Right ventricle myocardium inferior (tissue), 1 donor: ENCODE measurements at regions of chr10 and their contacts with region 1.

Region 1: DNA sequence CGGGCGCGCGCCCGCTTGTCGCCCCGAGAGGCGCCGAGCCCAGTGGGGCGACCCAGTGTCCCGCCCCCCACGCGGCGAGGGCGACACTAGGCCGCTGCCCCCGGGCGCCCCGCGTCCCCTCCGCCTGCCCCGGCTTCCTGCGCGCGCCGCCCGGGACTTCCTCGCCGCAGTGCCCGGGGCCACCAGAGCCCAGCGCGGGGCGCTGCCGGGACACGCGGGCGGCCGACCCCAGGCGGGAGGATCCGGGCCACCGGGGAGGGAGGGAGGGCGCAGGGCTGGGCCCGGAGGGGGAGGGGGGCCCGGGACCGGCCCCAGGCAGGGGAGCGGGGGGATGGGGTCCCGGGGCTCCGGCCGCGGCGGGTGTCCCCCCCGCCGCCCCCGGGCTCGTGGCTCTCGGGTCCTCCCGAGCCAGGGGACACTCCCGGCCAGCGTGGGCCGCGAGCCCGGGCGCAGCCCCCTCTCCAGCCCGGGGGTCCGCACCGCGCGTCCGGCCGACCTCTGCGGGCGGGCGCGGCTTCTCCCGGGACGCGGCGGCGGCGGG is 435 bp upstream of the PWWP2B start:
- DNase-seq: peak; percentile 86
- ATAC-seq: peak; percentile 53

Region 2: GRCh38 chr10:132331526-132332432 is 64.8 kb before region 1 on chr10 and contains the start of gene LRRC27:
- intact Hi-C with region 1: loop called (anchors 2 kb)
- DNase-seq: peak; percentile 99
- ATAC-seq: peak; percentile 95
- total RNA-seq, gene LRRC27: 4.2 TPM

Region 3: DNA sequence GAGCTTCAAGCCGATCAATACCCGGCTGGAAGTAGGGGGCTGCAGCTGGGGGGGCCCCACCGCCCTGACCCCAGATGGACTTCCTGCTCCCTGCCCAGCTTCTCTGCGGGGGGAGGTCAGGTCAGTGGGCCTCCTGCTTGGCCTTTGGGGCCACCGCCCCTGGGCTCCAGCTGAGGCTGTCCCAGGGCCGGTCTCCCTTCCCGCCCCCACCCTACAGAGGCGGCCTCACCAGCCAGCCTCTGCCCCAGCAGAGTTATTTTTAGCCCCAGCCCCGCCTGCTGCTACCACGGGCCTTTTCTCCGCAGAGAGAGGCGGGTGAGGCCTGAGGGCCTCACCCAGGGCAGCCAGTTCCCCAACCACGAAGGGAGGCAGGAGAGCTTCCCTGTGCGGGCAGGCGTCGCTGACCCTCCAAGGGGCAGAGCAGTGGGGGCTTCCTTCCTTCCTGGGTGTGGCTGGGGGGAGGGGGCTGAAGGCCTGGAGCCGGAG is 24.9 kb after region 1 on chr10:
- intact Hi-C with region 1: loop called (anchors 2 kb)
- DNase-seq: peak; percentile 91
- ATAC-seq: peak; percentile 89